Activated CD4-positive, alpha-beta memory T cell treated with anti-CD3 and anti-CD28 coated beads, Interleukin-2, amount 10 ng/mL, durations not matched to agents 7 days and 5 days (primary cell): ENCODE measurements at regions of chr17 and their contacts with region 1.

Region 1: DNA sequence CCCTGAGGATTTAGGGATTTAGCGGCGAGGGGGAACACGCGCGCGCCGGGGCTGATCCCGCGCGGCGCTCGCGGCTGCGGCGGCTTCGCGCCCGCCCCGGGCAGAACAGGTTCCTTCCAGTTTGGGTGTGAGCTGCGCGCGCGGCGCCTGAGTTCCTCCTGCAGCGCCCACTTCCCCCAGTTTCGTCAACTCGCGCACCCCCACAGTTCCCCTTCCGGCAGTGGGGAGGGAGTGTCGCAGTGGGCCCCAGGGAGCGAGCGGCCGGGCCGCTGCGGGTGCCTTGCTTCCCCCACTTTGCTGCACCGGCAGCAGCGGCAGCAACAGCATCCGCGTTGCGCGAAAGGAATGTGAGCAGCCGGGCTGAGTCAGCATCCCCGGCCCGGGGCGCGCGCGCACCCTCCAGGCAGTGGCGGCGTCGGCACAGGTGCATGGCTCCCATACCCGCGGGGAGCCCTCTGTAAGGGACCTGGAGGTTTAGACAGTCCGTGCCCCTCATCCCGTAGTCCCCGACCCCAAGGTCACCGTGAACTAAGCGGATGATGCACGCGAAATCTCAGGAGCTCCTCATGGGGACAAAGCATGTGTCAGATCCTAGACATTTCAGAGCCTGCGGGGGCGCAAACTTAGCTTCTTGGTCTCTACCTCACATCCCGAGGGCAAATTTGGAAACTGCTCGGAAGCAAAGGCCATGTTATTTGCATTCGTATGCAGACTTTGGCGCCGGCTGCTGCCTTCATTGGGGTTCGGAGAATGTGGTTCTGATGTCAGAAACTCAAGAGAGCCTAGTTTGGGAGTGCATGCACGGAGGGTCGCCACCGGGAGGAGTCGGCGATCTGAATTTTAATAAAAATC is 775 bp downstream of the ARSG start:
- DNase-seq: peak; percentile 97
- H3K4me3 Mint-ChIP-seq: peak overlapping the region; percentile 81
- H3K27ac Mint-ChIP-seq: peak overlapping the region; percentile 95
- H3K4me1 Mint-ChIP-seq: peaks cover 71% of the 10 kb centered on the region
- H3K27me3 Mint-ChIP-seq: no peaks in the 10 kb centered on the region

Region 2: DNA sequence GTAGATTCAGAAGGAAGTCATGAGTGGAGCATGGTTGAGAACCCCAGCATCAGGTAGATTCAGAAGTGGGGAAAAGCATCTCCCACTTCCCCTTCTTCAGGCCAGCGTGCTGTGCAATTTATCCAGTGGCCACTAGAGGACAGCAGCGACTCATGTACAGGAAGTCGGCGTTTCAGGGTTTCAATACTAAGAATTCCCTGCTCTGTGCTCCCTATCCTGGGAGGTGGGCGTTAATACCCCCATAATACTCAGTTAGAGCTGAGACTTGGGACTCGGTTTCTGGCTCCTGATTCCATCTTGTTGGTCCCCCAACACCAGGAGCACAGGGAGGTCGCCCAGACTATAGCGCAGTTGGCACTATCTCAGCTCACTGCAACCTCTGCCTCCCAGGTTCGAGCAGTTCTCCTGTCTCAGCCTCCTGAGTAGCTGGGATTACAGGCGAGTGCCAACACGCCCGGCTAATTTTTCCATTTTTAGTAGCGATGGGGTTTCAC is 119.6 kb before region 1 on chr17:
- CTCF ChIA-PET with region 1: no interaction called
- POLR2A ChIA-PET with region 1: no interaction called
- DNase-seq: peak; percentile 81
- H3K4me3 Mint-ChIP-seq: no peak overlapping the region
- H3K27ac Mint-ChIP-seq: no peak overlapping the region
- H3K4me1 Mint-ChIP-seq: peaks cover 27% of the 10 kb centered on the region
- H3K27me3 Mint-ChIP-seq: no peaks in the 10 kb centered on the region

Region 3: GRCh38 chr17:68184816-68185436 is 107.1 kb before region 1 on chr17:
- CTCF ChIA-PET with region 1: interaction called, 6 read pairs
- POLR2A ChIA-PET with region 1: interaction called, 36 read pairs
- DNase-seq: peak; percentile 73
- H3K4me3 Mint-ChIP-seq: peak overlapping the region; percentile 43
- H3K27ac Mint-ChIP-seq: peak overlapping the region; percentile 80
- H3K4me1 Mint-ChIP-seq: peaks cover 57% of the 10 kb centered on the region
- H3K27me3 Mint-ChIP-seq: no peaks in the 10 kb centered on the region

Region 4: DNA sequence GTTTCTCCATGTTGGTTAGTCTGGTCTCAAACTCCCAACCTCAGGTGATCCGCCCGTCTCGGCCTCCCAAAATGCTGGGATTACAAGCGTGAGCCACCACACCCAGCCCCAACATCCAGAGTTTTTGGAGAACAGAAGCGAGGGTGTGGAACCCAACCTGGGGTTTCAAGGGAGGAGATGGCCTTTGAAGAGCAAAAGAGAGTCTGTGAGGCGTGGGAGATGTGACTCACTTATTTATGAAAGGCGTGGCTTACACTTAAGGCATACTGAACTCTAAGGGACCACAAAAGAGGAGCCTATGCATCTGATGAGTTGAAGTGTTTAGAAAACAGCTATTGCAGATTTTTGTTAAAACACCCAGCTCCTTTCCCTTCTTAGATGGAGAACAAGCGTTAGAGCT is 18.1 kb after region 1 on chr17:
- CTCF ChIA-PET with region 1: interaction called, 10 read pairs
- POLR2A ChIA-PET with region 1: interaction called, 74 read pairs
- DNase-seq: peak; percentile 56
- H3K4me3 Mint-ChIP-seq: no peak overlapping the region
- H3K27ac Mint-ChIP-seq: peak overlapping the region; percentile 23
- H3K4me1 Mint-ChIP-seq: peaks cover 56% of the 10 kb centered on the region
- H3K27me3 Mint-ChIP-seq: no peaks in the 10 kb centered on the region

Region 5: DNA sequence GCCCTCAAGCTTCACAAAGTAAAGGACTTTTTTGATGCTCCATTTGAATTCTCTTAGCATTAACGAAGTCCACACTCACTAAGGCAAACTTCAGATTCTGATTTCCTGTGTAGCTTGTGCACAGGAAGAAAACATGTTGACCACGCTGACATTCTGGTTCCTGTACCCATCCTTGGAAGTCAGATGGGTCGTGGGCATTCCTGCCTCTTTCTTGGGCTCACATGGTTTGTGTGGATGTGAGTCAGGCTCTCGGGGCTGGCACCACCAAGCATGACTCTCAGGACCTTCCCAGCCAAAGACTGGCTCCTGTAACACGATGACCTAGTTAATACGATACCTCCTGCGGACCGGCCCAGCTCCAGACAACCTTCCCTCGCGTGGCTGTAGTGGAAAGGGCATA is 32.0 kb after region 1 on chr17:
- CTCF ChIA-PET with region 1: no interaction called
- POLR2A ChIA-PET with region 1: interaction called, 16 read pairs
- DNase-seq: no peak
- H3K4me3 Mint-ChIP-seq: no peak overlapping the region
- H3K27ac Mint-ChIP-seq: no peak overlapping the region
- H3K4me1 Mint-ChIP-seq: peaks cover 25% of the 10 kb centered on the region
- H3K27me3 Mint-ChIP-seq: no peaks in the 10 kb centered on the region

Region 6: DNA sequence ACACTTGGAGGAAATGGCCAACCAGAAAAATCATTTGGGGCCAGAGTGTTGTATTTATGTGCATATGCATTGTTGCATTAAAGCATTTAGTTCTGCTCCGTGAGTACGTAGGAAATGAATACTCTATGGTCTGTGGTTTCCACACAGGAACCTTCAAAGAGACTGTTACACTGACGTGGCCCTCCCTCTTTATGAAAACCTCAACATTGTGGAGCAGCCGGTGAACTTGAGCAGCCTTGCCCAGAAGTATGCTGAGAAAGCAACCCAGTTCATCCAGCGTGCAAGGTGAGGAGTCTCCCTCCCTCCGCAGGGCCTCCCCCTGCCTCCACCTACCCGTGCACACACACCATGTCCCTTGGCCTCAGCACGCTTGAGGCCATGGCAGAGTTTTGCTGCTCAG is 64.5 kb after region 1 on chr17:
- CTCF ChIA-PET with region 1: interaction called, 11 read pairs
- POLR2A ChIA-PET with region 1: interaction called, 138 read pairs
- DNase-seq: peak; percentile 85
- H3K4me3 Mint-ChIP-seq: peak overlapping the region; percentile 66
- H3K27ac Mint-ChIP-seq: peak overlapping the region; percentile 96
- H3K4me1 Mint-ChIP-seq: peaks cover 71% of the 10 kb centered on the region
- H3K27me3 Mint-ChIP-seq: no peaks in the 10 kb centered on the region

Region 7: GRCh38 chr17:68435876-68436842 is 144.1 kb after region 1 on chr17:
- CTCF ChIA-PET with region 1: interaction called, 24 read pairs
- POLR2A ChIA-PET with region 1: interaction called, 65 read pairs
- DNase-seq: peak; percentile 89
- H3K4me3 Mint-ChIP-seq: peak overlapping the region; percentile 60
- H3K27ac Mint-ChIP-seq: peak overlapping the region; percentile 90
- H3K4me1 Mint-ChIP-seq: peaks cover 67% of the 10 kb centered on the region
- H3K27me3 Mint-ChIP-seq: no peaks in the 10 kb centered on the region